GM23248 (cell line): ENCODE measurements at regions of chr14 and their contacts with region 1.

Region 1: DNA sequence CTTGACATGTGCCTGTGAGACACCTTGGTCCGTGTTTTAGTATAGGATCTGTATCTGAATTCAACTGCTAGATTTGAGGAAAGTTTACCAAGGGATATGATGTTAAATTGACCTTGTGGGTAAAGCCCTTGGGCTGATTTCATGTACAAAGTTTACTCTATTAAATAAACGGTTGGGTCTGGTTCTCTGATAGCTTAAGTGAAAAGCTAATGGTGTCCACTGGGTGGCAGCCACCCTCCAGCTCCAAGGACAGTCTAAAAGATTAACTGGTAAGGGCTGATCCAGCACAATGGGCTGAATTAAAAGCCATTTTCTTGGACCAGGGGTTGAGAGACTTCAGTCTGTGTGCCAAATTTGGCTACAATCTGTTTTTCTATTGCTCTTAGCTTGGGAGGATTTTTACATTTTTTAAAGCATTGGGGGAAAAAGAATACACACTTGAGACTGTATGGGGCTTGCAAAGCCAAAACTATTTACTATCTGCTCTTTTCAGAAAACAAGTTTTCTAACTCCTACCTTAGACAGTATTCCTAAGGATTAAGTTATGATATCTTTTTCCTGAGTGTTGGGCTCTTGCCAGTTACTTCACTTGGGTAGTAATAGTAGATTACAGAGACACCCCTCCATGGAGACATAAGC is 116.5 kb downstream of the GPHN start:
- DNase-seq: peak; percentile 77
- H3K4me3 ChIP-seq: no peak overlapping the region
- H3K27ac ChIP-seq: no peak overlapping the region
- H3K4me1 ChIP-seq: no peaks in the 10 kb centered on the region
- H3K27me3 ChIP-seq: no peaks in the 10 kb centered on the region

Region 2: DNA sequence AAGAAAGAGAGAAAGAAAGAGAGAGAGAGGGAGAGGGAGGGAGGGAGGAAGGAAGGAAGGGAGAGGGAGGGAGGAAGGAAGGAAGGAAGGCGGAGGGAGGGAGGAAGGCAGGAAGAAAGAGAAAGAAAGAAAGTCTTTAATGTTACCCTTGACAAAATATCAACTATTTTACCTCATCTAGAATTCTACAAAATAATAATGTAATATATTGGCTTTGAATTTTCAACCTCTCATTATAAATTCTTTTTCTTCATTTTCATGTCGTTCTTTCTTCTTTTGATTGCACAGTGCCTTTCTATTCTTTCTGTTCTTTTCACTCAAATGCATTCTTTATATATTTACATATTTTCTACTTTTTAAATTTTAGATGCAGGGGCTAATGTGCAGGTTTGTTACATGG is 505.4 kb after region 1 on chr14:
- in situ Hi-C with region 1: loop called (anchors 10 kb)
- DNase-seq: no peak
- H3K4me3 ChIP-seq: no peak overlapping the region
- H3K27ac ChIP-seq: no peak overlapping the region
- H3K4me1 ChIP-seq: no peaks in the 10 kb centered on the region
- H3K27me3 ChIP-seq: no peaks in the 10 kb centered on the region